ENCODE measurements at regions of chr4 and their contacts with region 1.

Region 1: DNA sequence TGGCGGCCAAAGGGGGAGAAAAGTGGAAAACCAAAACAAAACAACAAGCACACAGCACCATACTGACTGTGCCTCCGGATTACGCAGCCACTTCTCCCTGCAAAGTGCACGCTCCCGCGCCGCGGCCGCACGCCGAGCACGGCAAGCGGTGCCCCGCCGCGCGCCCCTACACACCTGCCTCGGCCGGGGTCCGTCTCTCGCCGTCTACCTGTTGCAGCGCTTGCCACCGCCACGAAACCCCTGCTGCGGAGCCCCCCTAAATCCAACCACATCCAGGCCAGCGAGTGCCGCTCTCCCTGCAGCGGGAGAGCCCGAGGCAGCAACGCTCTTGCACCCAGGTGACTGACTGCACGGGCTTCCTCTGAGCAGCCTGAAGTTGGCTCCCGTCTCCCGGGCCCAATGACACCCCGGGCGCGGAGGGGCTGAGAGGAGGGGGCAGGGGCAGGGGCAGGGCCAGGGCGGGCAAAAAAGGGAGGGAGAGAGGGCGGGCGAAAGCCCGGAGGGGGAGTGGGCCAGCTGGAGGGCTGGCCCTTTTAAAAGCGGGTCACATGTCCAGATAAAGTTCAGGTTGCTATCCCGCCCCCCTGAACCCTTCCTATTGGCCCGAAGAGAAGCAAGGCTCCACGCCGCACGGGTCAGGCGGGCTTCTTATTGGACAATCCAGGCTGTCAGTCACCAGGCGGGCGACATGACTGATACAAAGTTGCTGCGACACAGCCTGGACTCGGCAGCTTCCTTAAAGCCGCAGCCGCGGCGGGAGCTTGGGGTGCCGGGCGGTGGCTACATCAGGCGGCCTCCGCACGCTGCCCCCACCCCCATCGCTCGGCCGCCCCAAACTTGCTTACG is at the start of gene NR3C2:
- DNase-seq: peak; percentile 99
- H3K4me3 Mint-ChIP-seq: peak within 1 kb of the TSS; percentile 99
- H3K27ac Mint-ChIP-seq: peak within 1 kb of the TSS; percentile 96
- H3K4me1 Mint-ChIP-seq: peaks cover 30% of the 10 kb centered on the region
- H3K27me3 Mint-ChIP-seq: peaks cover 46% of the 10 kb centered on the region

Region 2: DNA sequence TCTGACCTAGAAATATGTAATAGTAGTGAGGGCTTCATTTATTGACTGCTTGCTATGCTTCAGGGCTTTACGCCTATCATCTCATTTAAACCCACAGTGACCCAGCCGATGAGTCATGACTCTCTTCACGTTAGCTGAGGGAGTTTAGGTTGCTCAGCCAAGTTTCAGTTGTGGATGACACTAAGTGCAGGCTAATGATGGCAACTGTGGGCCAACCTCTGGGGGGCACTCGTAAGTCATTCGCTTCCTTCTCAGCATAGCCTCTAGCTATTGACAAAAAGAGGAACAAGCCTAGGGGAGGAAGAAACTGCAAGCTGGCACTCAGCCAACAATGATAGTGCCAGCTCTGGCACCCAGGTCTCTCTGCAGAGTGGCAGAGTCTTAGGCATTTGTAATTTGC is 385.3 kb before region 1 on chr4:
- CTCF ChIA-PET with region 1: interaction called, 10 read pairs
- DNase-seq: peak; percentile 77
- H3K4me3 Mint-ChIP-seq: no peak overlapping the region
- H3K27ac Mint-ChIP-seq: peak overlapping the region; percentile 79
- H3K4me1 Mint-ChIP-seq: peaks cover 96% of the 10 kb centered on the region
- H3K27me3 Mint-ChIP-seq: no peaks in the 10 kb centered on the region

Region 3: DNA sequence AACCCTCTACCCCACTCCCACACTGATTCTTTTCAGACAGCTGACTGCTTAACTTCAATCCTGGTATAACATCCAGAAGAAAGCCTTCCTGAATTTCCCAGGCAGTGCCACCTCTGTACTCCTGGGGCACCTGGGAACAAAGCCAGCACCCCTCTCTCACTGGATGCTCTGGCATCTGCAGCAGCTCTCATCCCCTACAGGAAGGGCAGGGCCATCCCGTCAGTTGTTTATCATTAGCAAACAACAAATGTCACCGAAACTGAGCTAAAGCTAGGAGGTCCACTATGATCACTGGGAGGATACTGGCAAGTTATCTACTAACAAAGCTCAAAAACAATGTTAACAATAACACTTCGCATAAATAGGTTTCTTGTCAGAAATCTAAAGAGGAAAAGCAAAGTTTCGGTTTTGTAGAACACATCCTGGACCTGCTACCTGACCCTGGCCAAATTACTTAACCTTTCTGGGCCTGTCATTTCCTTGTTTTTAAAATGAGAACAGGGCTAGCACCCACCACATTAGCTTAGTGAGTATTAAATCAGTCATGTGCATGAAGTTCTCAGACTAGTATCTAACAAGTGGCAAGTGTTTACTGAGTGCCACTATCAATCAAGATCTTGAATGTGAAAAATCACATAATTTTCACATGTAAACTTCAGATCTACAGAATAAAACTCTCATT is 86.6 kb before region 1 on chr4:
- CTCF ChIA-PET with region 1: no interaction called
- DNase-seq: no peak
- H3K4me3 Mint-ChIP-seq: no peak overlapping the region
- H3K27ac Mint-ChIP-seq: peak overlapping the region; percentile 83
- H3K4me1 Mint-ChIP-seq: peaks cover 20% of the 10 kb centered on the region
- H3K27me3 Mint-ChIP-seq: no peaks in the 10 kb centered on the region

Region 4: DNA sequence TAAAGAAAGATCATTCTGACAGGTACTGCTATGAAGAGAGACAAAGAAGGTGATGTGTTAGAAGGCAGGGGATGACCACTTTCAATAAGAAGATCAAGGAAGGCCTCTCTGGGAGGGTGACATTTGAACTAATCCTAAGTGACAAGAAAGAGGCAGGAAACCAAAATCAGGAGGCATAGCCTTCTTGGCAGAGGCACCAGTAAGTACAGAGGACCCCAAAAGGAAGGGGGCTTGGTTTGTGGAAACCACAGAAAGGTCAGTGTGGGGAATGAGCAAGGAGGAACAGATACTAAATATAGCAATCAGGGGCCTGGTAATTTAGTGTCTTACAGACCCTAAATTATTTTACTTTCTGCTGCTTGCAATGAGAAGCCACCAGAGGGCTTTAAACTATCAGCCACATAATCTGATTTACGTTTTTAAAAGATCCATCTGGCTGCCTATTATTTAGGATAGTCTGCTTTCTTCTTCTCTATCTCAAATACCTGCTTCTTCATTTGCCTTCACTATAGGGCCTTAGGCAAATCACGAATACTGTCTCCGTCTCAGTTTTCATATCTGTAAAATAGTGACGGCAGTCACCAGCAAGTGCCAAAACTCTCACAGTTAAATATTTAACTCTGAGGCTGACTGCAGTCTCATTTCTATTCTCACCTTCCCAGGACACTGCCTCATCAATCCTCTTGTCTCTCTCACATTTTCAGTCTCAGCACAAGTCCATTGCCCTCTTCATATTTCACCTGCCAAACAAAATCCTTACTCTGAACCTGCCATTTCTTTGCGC is 16.7 kb before region 1 on chr4:
- CTCF ChIA-PET with region 1: no interaction called
- DNase-seq: no peak
- H3K4me3 Mint-ChIP-seq: no peak overlapping the region
- H3K27ac Mint-ChIP-seq: no peak overlapping the region
- H3K4me1 Mint-ChIP-seq: peaks cover 10% of the 10 kb centered on the region
- H3K27me3 Mint-ChIP-seq: no peaks in the 10 kb centered on the region

Measured in activated naive CD4-positive, alpha-beta T cell treated with anti-CD3 and anti-CD28 coated beads, Interleukin-2, amount 10 ng/mL, durations not matched to agents 7 days and 5 days (primary cell).